Cardiac septum (tissue), 1 donor: ENCODE measurements at regions of chr9 and their contacts with region 1.

Region 1: DNA sequence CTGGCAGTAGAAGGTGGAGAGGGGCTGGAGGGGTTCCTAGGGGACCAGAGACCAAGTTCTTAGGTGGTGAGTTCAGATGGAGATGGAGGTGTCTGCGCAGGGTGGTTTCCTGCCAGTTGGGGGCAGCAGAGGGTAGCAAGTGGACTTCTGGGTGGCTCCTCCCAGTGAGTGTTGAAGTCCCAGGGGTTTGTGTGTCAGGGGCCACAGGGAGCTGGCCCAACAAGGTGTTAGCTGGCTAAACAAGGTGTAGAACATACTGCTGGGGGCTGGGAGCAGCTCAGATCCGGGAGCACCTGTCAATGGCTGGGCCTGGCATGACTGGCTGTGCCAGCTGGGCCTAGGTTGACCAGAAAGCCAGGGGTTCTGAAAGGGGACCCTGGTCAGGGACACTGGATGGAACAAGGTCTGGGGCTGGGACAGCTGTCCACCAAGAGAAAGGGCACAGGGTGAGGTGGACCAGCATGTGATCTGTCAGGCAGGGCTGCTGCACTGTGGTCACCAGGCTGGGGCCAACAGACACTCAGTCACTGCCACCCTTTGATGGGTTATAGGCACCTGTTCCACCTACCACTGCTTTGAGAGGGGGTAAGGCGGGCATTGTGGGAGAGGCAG is 35.6 kb downstream of the DAB2IP start:
- DNase-seq: no peak

Region 2: GRCh38 chr9:121861501-121862180 is 174.6 kb after region 1 on chr9:
- intact Hi-C with region 1: loop called (anchors 5 kb)
- DNase-seq: peak; percentile 74